ENCODE measurements at regions of chr6 and their contacts with region 1.

Region 1: DNA sequence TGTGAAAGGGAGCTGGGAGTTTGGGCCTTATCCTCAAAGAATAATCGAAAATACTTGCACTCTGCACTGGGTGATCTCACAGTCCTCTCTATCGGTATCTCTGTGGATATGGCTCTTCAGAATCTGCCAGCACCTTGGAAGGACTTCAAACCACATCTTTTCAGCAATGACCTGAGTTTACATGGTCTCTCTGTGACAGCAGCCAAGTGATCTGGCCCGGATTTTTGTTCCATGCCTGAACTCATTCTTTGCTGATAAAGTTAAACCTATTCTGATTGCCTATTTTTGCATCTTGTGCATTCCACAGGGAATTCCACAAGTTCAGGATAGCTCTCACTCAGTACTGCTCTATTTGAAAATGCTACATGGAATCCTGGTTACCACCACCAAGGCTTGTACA is 98.9 kb downstream of the HDGFL1 start:
- DNase-seq: no peak
- ATAC-seq: no peak
- H3K4me3 ChIP-seq: no peak overlapping the region
- H3K4me1 ChIP-seq: no peaks in the 10 kb centered on the region
- CTCF ChIP-seq: no peak

Region 2: DNA sequence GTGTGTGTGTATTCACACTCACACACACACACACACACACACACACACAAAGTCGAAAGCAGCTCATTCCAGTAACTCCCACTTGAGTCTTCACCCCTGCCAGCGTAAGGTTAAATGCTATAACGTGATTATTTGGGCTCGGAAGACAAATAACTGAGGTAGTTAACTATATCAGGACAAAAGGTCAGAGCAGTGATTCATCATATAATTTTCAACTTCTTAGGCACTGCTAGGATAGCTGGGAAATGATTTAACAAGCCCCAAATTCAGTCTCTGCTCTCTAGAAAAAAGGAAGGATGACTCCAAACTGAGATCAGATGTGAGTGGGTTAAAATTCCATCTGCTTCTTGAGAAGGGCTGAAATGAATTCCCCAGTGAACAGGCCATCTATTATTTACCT is 68.2 kb before region 1 on chr6:
- intact Hi-C with region 1: loop called in 1 of 2 experiments (anchors 2 kb)
- DNase-seq: no peak
- ATAC-seq: no peak
- H3K4me3 ChIP-seq: no peak overlapping the region
- H3K4me1 ChIP-seq: no peaks in the 10 kb centered on the region
- CTCF ChIP-seq: no peak

Measured in mucosa of descending colon (tissue), 3 donors.